Mammary epithelial cell (primary cell): ENCODE measurements at regions of chr14 and their contacts with region 1.

Region 1: DNA sequence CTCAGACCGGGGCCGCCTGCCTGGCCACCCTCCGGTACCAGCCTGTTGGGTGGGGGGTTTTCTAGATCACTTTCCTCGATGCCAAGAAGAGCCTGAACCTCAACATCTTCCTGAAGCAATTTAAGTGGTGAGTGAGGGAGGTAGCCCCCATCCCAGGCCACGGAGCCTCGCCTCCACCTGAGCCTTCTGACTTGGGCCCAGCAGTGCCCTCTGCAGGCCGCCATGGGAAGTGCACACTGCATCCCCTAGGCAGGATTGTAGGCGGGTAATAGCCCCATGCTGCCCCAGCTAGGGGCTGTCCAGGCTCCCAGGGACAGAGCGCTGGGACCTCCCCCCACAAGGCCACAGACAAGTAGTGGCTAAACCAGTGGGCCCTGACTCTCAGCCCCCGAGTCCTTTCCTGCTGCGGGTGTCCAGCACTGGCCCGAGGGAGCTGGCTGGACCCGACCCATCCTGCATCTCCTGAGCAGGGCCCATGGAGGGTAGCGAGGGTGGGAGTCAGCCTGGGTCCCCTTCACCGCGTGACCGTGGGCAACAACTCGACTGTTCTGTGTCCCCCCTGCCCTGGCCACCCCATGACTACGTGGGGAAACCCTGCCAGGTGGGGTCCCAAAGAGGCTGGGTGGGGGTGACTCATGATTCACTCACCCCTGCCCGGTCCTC is 15.3 kb upstream of the ADSS1 start:
- DNase-seq: no peak
- H3K4me3 ChIP-seq: no peak overlapping the region
- H3K27ac ChIP-seq: no peak overlapping the region
- H3K4me1 ChIP-seq: no peaks in the 10 kb centered on the region
- H3K27me3 ChIP-seq: no peaks in the 10 kb centered on the region
- CTCF ChIP-seq: peak; percentile 97 to 99

Region 2: DNA sequence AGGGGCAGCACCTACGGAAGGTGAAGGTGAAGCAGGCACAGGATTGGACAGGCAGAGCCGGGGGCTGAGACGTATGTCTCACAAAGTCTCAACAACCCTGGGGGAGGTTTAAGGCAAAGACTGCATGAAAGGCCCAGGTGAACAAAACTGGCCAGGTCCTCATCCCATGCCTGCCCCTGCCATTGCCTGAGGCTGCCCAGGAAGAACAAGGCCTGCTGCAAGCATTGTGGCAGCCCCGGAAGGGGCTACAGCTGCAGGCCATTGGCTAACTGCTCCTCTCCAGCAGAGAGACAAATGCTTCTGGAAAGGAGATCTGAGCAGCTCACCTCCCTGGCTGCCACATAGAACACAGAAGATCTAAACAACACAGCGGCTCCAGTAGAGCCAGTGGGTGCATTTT is 83.8 kb before region 1 on chr14:
- CTCF ChIA-PET with region 1: no interaction called
- dilution Hi-C with region 1: loop called (anchors 5 kb)
- in situ Hi-C with region 1: no loop called
- intact Hi-C with region 1: no loop called
- DNase-seq: no peak
- H3K4me3 ChIP-seq: no peak overlapping the region
- H3K27ac ChIP-seq: no peak overlapping the region
- H3K4me1 ChIP-seq: no peaks in the 10 kb centered on the region
- H3K27me3 ChIP-seq: no peaks in the 10 kb centered on the region
- CTCF ChIP-seq: no peak

Region 3: DNA sequence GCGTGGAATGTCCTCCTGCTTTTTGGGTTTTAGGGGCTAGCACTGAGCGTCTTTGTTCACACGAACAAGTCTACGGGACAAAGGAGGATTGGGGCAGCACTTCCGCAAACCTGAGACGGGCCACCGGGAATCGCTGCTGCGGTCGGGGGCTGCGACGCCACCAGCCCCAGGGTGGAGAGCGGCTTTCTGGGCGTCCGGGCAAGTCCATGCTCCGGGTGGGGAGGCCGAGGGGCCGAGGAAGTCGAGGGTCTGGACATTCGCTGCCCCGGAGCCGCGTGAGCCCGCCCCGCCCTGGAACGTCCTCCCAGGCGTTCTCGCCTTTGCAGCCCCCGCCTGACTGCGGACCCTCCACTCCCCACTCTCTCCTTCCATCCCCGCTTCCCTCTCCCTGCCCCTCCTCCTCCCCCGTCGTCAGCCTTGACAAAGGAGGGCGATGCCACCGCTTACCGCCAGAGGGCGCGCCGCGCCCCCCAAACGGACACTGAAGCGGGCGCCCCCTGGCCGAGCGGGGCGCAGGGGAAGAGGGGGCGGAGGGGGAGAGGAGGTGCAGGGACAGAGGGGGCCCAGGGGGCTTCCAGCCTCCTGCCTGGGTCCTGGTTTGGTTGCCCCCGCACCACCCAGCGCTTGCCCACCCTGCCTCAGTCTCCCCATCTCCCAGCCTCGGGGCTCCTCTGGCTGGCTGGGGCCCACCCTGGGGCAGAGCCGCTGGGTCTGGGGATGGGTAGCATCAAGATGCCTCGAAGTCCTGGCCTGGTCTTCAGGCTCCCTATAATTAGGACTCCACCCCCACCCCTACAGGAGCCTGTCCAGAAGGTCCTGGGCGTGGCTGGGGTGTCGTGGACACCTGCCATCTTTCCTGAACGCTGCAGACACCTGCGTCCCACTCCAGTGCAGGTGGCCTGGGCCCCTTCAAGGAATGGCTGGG is 58.4 kb before region 1 on chr14:
- CTCF ChIA-PET with region 1: no interaction called
- dilution Hi-C with region 1: no loop called
- in situ Hi-C with region 1: loop called in 1 of 2 experiments (anchors 10 kb)
- intact Hi-C with region 1: loop called (anchors 1 kb)
- DNase-seq: no peak
- H3K4me3 ChIP-seq: peak overlapping the region; percentile 48 to 63 (median 59)
- H3K27ac ChIP-seq: no peak overlapping the region
- H3K4me1 ChIP-seq: peaks cover 9% of the 10 kb centered on the region
- H3K27me3 ChIP-seq: no peaks in the 10 kb centered on the region
- CTCF ChIP-seq: peak; percentile 83 to 99

Region 4: GRCh38 chr14:104665657-104666522 is 42.8 kb before region 1 on chr14:
- CTCF ChIA-PET with region 1: no interaction called
- dilution Hi-C with region 1: no loop called
- in situ Hi-C with region 1: no loop called
- intact Hi-C with region 1: loop called (anchors 1 kb)
- DNase-seq: peak; percentile 30
- H3K4me3 ChIP-seq: no peak overlapping the region
- H3K27ac ChIP-seq: no peak overlapping the region
- H3K4me1 ChIP-seq: peaks cover 8% of the 10 kb centered on the region
- H3K27me3 ChIP-seq: no peaks in the 10 kb centered on the region
- CTCF ChIP-seq: peak; percentile 34 to 66

Region 5: DNA sequence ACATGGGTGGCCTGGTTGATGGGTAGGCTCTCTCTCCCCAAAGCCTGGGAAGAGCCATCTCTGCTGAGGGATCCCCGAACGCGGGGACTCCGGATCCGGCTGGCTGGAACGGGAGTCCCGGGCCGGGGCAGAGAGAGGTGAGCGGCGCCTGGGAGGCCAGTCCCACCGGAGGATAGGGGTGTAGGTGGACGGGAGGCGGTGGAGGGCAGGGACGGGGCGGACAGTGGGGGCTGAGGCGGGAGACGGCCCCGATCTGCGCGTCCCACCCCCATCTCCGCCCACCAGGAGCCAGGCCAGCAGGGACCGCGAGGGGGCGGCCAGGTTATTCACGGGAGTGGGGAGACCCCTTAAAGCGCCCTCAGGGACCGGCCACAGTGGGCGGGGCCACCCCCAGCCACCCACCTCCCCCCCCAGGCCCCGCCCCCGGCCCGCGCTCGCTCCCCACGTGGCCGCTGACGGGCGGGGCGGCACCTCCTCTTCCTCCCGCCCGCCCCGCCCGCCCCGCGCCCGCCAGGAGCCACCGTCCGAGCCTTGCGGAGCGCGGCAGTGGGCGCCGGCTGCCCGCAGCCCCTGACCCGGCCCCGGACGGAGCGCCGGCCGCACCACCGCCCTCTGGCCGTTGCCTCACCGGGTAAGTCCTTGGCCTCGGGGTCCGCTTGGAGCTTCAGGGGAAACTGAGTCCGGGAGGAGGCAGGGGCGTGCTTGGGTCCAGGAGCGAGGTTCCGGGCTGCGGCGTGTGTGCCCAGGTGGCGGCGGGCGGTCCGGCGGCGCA is 19.4 kb before region 1 on chr14 and contains the start of gene INF2:
- CTCF ChIA-PET with region 1: no interaction called
- dilution Hi-C with region 1: no loop called
- in situ Hi-C with region 1: no loop called
- intact Hi-C with region 1: loop called (anchors 2 kb)
- DNase-seq: peak; percentile 57
- H3K4me3 ChIP-seq: peak within 1 kb of the TSS; percentile 71 to 98 (median 89)
- H3K27ac ChIP-seq: peak within 1 kb of the TSS; percentile 61
- H3K4me1 ChIP-seq: peaks cover 70% of the 10 kb centered on the region
- H3K27me3 ChIP-seq: no peaks in the 10 kb centered on the region
- CTCF ChIP-seq: no peak
- total RNA-seq, gene INF2: 65.7 to 125 TPM

Region 6: DNA sequence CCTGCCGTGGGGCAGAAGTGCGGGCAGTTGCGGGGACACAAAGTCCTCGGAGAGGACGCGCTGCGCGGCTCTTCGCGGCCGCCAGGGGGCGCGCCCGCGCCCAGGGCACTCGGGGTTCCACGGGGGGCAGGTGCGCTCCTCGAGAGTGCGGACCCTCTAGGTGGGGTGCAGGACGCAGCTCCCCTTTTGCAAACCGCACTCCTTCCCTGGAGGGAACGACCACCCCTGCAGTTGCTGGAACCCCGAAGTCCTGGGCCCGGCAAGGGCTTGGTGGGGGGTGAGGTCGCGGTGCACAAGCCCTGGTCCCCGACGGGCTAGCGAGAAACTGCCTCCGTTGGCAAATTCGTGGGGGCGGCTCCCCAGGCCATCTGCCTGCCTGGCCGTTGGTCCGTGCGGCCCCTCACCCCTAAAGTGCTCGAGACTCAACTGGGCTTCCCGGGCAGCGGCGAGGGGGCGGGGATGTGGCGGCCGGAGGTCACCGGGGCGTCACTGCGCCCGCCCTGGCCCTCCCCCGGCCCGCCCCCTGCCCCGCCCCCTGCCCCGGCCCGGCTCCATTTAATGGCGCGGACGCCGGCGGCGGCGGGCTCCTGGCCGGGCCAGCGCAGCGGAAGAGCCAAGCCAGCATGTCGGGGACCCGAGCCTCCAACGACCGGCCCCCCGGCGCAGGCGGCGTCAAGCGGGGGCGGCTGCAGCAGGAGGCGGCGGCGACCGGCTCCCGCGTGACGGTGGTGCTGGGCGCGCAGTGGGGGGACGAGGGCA is 15.1 kb after region 1 on chr14 and contains the start of gene ADSS1:
- CTCF ChIA-PET with region 1: no interaction called
- dilution Hi-C with region 1: no loop called
- in situ Hi-C with region 1: no loop called
- intact Hi-C with region 1: no loop called
- DNase-seq: peak; percentile 35
- H3K4me3 ChIP-seq: peak within 1 kb of the TSS; percentile 49 to 63 (median 50)
- H3K27ac ChIP-seq: no peak within 1 kb of the TSS
- H3K4me1 ChIP-seq: peaks cover 19% of the 10 kb centered on the region
- H3K27me3 ChIP-seq: no peaks in the 10 kb centered on the region
- CTCF ChIP-seq: peak; percentile 59 to 94
- total RNA-seq, gene ADSS1: 1.5 to 3.8 TPM

Region 7: DNA sequence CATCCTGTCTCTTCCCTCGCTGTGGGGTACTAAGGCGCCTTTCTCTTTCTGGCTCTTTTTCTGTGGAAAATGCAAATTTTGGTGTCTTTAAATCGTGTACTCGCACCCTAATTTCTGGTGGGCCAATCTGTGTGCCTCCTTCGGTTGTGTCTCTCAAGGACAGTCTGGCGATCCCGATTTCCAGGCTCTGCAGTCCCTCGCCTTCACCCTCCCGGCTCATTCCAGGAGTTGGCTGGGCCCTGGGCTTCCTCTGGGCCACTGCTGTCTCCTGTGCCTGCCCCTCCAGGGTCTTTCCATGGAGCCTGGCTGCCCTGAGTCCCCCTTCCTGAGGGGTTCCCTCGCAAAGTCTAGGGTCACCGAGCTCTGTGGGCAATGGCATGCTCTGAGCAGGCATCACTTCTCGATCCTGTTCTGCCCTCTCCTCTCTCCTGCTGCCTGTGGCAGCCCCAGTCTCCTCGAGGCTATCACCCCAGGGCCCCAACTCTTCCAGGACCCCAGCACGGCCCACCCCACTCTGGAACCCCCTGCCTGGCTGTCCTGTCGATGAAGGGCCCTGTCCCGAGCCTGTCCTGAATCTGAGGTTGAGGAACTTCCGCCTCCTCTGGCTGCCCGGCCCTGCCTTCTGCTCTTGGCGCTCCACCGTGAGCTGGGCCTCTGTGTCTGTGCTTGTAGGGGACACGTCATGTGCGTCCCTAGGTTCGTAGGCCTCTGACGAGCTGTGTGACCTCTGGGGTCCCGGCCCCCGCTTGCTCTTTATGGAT is 245.3 kb after region 1 on chr14:
- CTCF ChIA-PET with region 1: no interaction called
- dilution Hi-C with region 1: no loop called
- in situ Hi-C with region 1: no loop called
- intact Hi-C with region 1: no loop called
- DNase-seq: no peak
- H3K4me3 ChIP-seq: no peak overlapping the region
- H3K27ac ChIP-seq: no peak overlapping the region
- H3K4me1 ChIP-seq: no peaks in the 10 kb centered on the region
- H3K27me3 ChIP-seq: no peaks in the 10 kb centered on the region
- CTCF ChIP-seq: no peak